RWPE1 (cell line): ENCODE measurements at regions of chr12 and their contacts with region 1.

Region 1: GRCh38 chr12:9925708-9926393 is 6.3 kb downstream of the CLEC2A start:
- DNase-seq: peak; percentile 23
- H3K27ac ChIP-seq: no peak overlapping the region
- CTCF ChIP-seq: peak; percentile 27

Region 2: GRCh38 chr12:9340422-9341259 is 585.2 kb before region 1 on chr12:
- CTCF ChIA-PET with region 1: no interaction called
- POLR2A ChIA-PET with region 1: no interaction called
- DNase-seq: no peak
- H3K27ac ChIP-seq: no peak overlapping the region
- CTCF ChIP-seq: no peak

Region 3: GRCh38 chr12:9813821-9814809 is 111.7 kb before region 1 on chr12:
- CTCF ChIA-PET with region 1: interaction called, 14 read pairs
- POLR2A ChIA-PET with region 1: interaction called, 3 read pairs
- DNase-seq: peak; percentile 68
- H3K27ac ChIP-seq: no peak overlapping the region
- CTCF ChIP-seq: peak; percentile 50